ENCODE measurements at regions of chr6 and their contacts with region 1.

Region 1: DNA sequence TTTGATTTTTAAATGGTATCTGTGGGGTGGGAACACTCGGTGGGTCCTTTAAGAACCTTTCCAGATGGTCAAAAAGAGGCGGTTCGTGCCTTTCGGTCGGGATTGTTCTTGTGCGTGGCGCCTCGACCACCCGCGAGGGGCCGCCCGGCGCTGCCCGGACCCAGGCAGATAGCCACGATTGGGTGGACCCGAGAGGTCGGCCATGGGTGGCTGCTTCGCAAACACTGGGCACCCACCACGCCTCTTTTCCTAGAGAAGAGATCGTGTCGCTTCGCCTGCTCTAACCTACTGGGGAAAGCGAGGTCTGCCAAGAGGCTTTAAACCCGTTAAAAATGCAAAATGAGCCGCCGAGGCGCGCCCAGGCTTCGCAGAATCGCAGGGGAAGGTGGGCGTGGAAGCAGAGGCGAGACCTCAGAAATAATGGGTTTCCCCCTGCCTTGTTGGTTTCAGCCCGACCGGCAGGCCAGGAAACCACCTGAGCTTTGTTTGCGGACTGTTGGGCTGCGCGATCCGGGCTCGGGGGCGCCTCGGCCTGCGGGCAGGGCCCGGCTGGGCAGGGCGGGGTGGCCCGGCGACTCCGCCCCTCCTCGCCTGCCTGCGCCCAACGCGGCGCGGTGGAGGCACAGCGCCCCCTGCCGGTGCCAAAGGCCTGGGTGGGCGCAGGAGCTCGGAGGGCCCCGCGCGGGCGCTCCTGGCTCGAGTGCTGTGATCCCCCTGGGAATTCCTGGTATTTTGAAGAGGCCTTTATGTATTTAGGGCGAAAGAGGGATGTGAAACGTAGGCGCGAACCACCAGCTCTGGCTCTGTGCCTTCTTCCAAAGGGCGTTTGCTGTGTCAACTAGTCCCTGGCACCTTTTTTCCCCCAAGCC is 1.6 kb downstream of the MARCKS start:
- DNase-seq: peak; percentile 77 to 85
- ATAC-seq: peak; percentile 88 to 95 (median 90)
- H3K4me3 ChIP-seq: peak overlapping the region; percentile 51
- H3K4me3 Mint-ChIP-seq: peak overlapping the region; percentile 9
- H3K27ac ChIP-seq: peak overlapping the region; percentile 78
- H3K27ac Mint-ChIP-seq: peak overlapping the region in 1 of 2 donors; percentile 48
- H3K4me1 ChIP-seq: peaks cover 48% of the 10 kb centered on the region
- H3K4me1 Mint-ChIP-seq: peaks cover 5 to 6% of the 10 kb centered on the region in 2 donors
- H3K27me3 ChIP-seq: peaks cover 53% of the 10 kb centered on the region
- H3K27me3 Mint-ChIP-seq: peaks cover 26 to 36% of the 10 kb centered on the region in 2 donors
- CTCF ChIP-seq: peak; percentile 79

Region 2: GRCh38 chr6:113031591-113032238 is 827.0 kb before region 1 on chr6:
- intact Hi-C with region 1: no loop called
- DNase-seq: no peak
- ATAC-seq: no peak
- H3K4me3 ChIP-seq: no peak overlapping the region
- H3K4me3 Mint-ChIP-seq: no peak overlapping the region
- H3K27ac ChIP-seq: no peak overlapping the region
- H3K27ac Mint-ChIP-seq: no peak overlapping the region
- H3K4me1 ChIP-seq: no peaks in the 10 kb centered on the region
- H3K4me1 Mint-ChIP-seq: no peaks in the 10 kb centered on the region
- H3K27me3 ChIP-seq: no peaks in the 10 kb centered on the region
- H3K27me3 Mint-ChIP-seq: no peaks in the 10 kb centered on the region
- CTCF ChIP-seq: no peak

Region 3: GRCh38 chr6:113306552-113307145 is 552.1 kb before region 1 on chr6:
- intact Hi-C with region 1: loop called (anchors 5 kb)
- DNase-seq: peak; percentile 16 to 43
- ATAC-seq: peak in 1 of 3 donors; percentile 57
- H3K4me3 ChIP-seq: no peak overlapping the region
- H3K4me3 Mint-ChIP-seq: no peak overlapping the region
- H3K27ac ChIP-seq: no peak overlapping the region
- H3K27ac Mint-ChIP-seq: no peak overlapping the region
- H3K4me1 ChIP-seq: no peaks in the 10 kb centered on the region
- H3K4me1 Mint-ChIP-seq: no peaks in the 10 kb centered on the region
- H3K27me3 ChIP-seq: no peaks in the 10 kb centered on the region
- H3K27me3 Mint-ChIP-seq: no peaks in the 10 kb centered on the region
- CTCF ChIP-seq: no peak

Measured in natural killer cell (primary cell).